ENCODE measurements at regions of chr7 and their contacts with region 1.

Region 1: DNA sequence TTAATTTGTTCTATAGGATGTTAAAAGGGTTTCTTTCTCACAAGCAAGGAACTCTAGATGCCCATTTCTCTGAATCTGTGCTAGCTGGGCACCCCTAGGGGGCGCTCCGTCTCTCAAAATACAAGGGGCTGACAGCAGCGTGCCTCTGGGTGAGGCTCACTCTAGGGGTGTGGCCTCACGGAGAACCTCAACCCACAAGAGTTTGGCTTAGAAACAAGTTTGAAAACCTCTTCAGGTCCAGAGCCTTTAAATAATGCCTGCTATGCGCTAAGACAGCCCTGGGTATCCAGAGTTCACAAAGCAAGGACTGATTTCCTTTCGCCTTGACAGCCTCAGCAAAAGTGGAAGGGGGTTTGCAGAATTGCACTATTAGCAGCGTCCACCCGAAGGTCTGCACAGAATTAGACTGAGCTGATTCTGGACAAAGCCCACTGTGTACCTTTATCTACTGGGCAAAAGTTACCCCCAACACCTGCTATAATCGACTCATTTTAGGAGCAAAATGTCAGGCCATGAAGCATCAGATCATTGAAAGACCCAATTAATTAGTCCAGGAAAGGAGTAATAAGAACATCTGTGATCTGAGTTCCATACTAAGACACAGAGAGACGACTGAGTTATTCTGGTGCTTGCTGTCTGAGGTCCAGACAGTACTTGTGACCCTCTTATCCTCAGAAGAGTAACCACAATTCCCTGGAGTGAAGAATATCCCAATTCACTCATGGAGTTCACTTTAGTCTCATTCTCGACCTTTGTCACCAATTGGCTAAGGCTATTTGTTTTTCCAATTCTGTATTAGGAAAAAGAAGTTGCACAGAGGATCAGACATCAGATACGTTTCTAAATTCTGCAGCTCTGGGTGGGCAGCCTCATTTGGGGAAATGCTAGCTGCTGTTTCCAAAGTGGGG is 574 bp upstream of the CPED1 start:
- DNase-seq: peak; percentile 94
- ATAC-seq: peak; percentile 75
- H3K4me3 ChIP-seq: peak overlapping the region; percentile 86
- H3K27ac ChIP-seq: peak overlapping the region; percentile 95
- H3K4me1 ChIP-seq: no peaks in the 10 kb centered on the region
- H3K27me3 ChIP-seq: no peaks in the 10 kb centered on the region
- CTCF ChIP-seq: peak; percentile 96
- POLR2A ChIP-seq: peak; percentile 43; the same call in 1 of the 2 replicates
- RAD21 ChIP-seq: peak; percentile 91

Region 2: GRCh38 chr7:121081327-121081936 is 93.5 kb after region 1 on chr7:
- CTCF ChIA-PET with region 1: interaction called, 46 read pairs
- POLR2A ChIA-PET with region 1: interaction called, 26 read pairs
- dilution Hi-C with region 1: loop called (anchors 25 kb)
- in situ Hi-C with region 1: loop called (anchors 5 kb)
- intact Hi-C with region 1: loop called (anchors 1 kb)
- DNase-seq: peak; percentile 85
- ATAC-seq: peak; percentile 19
- H3K4me3 ChIP-seq: no peak overlapping the region
- H3K27ac ChIP-seq: no peak overlapping the region
- H3K4me1 ChIP-seq: peaks cover 19% of the 10 kb centered on the region
- H3K27me3 ChIP-seq: no peaks in the 10 kb centered on the region
- CTCF ChIP-seq: peak; percentile 78
- POLR2A ChIP-seq: no peak
- RAD21 ChIP-seq: peak; percentile 78

Region 3: DNA sequence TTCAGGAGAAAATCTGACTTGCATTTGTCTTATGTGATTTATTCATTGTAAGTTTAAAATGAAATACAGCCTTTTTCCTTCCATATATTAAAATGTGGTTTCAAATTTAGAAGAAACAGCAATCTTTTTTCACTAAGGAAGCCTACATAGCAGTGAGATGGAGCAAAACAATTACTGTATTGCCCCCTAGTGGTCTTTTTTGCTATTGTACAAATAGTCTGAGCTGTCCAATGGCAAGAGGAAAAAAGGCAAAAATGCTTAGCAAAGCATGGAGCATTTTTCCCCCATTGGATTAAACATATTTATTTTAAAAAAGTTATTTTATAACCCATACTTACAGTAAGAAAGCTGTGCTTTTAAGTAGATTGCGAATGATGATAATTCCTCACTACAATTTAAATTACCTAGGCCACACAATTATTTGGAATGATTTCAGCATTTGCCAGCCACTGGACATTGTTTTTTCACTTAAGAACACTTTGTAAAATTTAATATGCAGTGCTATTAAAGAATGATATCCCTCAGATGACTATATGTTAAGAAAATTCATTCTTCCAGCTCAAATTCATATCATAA is 120.1 kb after region 1 on chr7:
- CTCF ChIA-PET with region 1: interaction called, 8 read pairs
- POLR2A ChIA-PET with region 1: no interaction called
- dilution Hi-C with region 1: no loop called
- in situ Hi-C with region 1: no loop called
- intact Hi-C with region 1: loop called (anchors 1 kb)
- DNase-seq: peak; percentile 78
- ATAC-seq: peak; percentile 92
- H3K4me3 ChIP-seq: no peak overlapping the region
- H3K27ac ChIP-seq: no peak overlapping the region
- H3K4me1 ChIP-seq: peaks cover 4% of the 10 kb centered on the region
- H3K27me3 ChIP-seq: no peaks in the 10 kb centered on the region
- CTCF ChIP-seq: peak; percentile 87
- POLR2A ChIP-seq: no peak
- RAD21 ChIP-seq: peak; percentile 83

Region 4: DNA sequence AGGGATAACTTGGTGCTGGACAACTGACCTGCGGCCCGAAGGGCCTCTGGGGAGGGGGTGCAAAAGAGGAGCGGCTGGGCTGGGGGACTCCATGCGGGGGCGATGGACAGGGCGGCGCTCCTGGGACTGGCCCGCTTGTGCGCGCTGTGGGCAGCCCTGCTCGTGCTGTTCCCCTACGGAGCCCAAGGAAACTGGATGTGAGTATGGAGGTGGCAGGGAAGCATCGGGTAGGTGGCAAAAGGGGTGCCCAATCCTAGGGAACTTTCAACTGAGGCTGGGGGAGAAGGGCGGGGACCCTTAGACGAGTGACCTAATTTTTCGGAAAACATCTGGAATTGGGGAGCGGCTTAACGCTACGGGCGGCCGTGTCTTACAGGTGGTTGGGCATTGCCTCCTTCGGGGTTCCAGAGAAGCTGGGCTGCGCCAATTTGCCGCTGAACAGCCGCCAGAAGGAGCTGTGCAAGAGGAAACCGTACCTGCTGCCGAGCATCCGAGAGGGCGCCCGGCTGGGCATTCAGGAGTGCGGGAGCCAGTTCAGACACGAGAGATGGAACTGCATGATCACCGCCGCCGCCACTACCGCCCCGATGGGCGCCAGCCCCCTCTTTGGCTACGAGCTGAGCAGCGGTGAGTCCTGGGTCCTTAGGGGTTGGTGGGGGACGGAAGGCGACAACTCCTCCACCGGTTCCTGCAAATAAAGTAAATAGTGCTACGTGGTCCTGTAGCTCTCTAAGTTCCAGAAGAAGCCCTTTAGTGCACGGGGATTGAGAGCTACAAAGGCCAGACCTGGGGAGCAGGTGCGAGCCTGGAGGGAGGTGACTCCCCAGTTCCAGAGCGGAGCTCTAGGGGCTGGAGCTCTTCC is 341.5 kb after region 1 on chr7:
- CTCF ChIA-PET with region 1: no interaction called
- POLR2A ChIA-PET with region 1: no interaction called
- dilution Hi-C with region 1: no loop called
- in situ Hi-C with region 1: loop called (anchors 25 kb)
- intact Hi-C with region 1: no loop called
- DNase-seq: no peak
- ATAC-seq: peak; percentile 57
- H3K4me3 ChIP-seq: peak overlapping the region; percentile 63
- H3K27ac ChIP-seq: no peak overlapping the region
- H3K4me1 ChIP-seq: no peaks in the 10 kb centered on the region
- H3K27me3 ChIP-seq: peaks cover 21% of the 10 kb centered on the region
- CTCF ChIP-seq: no peak; the same call in 1 of the 2 replicates
- POLR2A ChIP-seq: no peak
- RAD21 ChIP-seq: no peak

Region 5: GRCh38 chr7:121337398-121337797 is 349.5 kb after region 1 on chr7:
- CTCF ChIA-PET with region 1: no interaction called
- POLR2A ChIA-PET with region 1: no interaction called
- dilution Hi-C with region 1: no loop called
- in situ Hi-C with region 1: loop called (anchors 25 kb)
- intact Hi-C with region 1: loop called (anchors 5 kb)
- DNase-seq: no peak
- ATAC-seq: peak; percentile 56
- H3K4me3 ChIP-seq: no peak overlapping the region
- H3K27ac ChIP-seq: no peak overlapping the region
- H3K4me1 ChIP-seq: peaks cover 5% of the 10 kb centered on the region
- H3K27me3 ChIP-seq: no peaks in the 10 kb centered on the region
- CTCF ChIP-seq: peak; percentile 46
- POLR2A ChIP-seq: no peak
- RAD21 ChIP-seq: peak; percentile 50

Region 6: GRCh38 chr7:121563177-121563576 is 575.2 kb after region 1 on chr7:
- CTCF ChIA-PET with region 1: no interaction called
- POLR2A ChIA-PET with region 1: no interaction called
- dilution Hi-C with region 1: no loop called
- in situ Hi-C with region 1: no loop called
- intact Hi-C with region 1: no loop called
- DNase-seq: no peak
- ATAC-seq: no peak
- H3K4me3 ChIP-seq: no peak overlapping the region
- H3K27ac ChIP-seq: no peak overlapping the region
- H3K4me1 ChIP-seq: no peaks in the 10 kb centered on the region
- H3K27me3 ChIP-seq: no peaks in the 10 kb centered on the region
- CTCF ChIP-seq: peak; percentile 9; the same call in 1 of the 2 replicates
- POLR2A ChIP-seq: no peak
- RAD21 ChIP-seq: no peak

Measured in IMR-90 (cell line).